ENCODE measurements at regions of chr13 and their contacts with region 1.

Region 1: GRCh38 chr13:41061075-41061913 is at the start of gene WBP4:
- DNase-seq: peak; percentile 95
- total RNA-seq, gene WBP4: 18.1 TPM

Region 2: GRCh38 chr13:40789275-40790133 is 271.8 kb before region 1 on chr13 and contains the start of gene SLC25A15:
- intact Hi-C with region 1: loop called (anchors 2 kb)
- DNase-seq: peak; percentile 88
- total RNA-seq, gene SLC25A15: 4.4 TPM

Region 3: GRCh38 chr13:40982772-40983171 is 78.5 kb before region 1 on chr13:
- intact Hi-C with region 1: loop called (anchors 5 kb)
- DNase-seq: no peak

Region 4: GRCh38 chr13:41132512-41133152 is 71.3 kb after region 1 on chr13 and contains the start of gene KBTBD6:
- intact Hi-C with region 1: loop called (anchors 5 kb)
- DNase-seq: peak; percentile 98
- total RNA-seq, gene KBTBD6: 5.1 TPM

Region 5: GRCh38 chr13:41310963-41311606 is 249.8 kb after region 1 on chr13 and contains the start of gene NAA16:
- intact Hi-C with region 1: loop called (anchors 2 kb)
- DNase-seq: peak; percentile 95
- total RNA-seq, gene NAA16: 10.2 TPM